ENCODE measurements at regions of chr7 and their contacts with region 1.

Region 1: GRCh38 chr7:55255496-55256435 is 109.4 kb upstream of the LANCL2 start:
- DNase-seq: no peak
- H3K4me3 ChIP-seq: peak overlapping the region; percentile 52
- H3K27me3 ChIP-seq: no peaks in the 10 kb centered on the region
- CTCF ChIP-seq: peak; percentile 84

Region 2: DNA sequence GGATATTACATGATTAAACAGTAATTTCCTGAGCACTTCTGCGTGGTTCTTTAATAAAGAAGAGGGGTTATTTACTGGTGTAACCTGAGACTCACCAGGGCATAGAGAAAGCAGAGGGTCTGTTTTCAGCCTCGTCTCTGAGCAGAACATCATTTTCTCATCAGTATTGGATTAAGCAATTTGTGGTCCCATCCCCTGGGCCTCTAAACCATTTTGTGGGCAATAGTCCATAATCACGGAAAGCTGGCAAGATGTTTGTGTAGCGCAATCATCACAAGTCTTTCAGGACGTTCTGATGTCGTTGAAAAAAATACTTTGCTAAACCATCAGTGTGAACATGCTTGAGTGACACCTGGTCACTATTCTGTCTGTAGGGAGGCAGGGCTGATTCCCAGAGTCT is 459.6 kb before region 1 on chr7:
- CTCF ChIA-PET with region 1: interaction called, 131 read pairs
- POLR2A ChIA-PET with region 1: no interaction called
- DNase-seq: no peak
- H3K4me3 ChIP-seq: no peak overlapping the region
- H3K27me3 ChIP-seq: no peaks in the 10 kb centered on the region; the same call in 1 of the 2 replicates
- CTCF ChIP-seq: no peak

Region 3: GRCh38 chr7:54877683-54878082 is 378.1 kb before region 1 on chr7:
- CTCF ChIA-PET with region 1: interaction called, 24 read pairs
- POLR2A ChIA-PET with region 1: no interaction called
- DNase-seq: no peak
- H3K4me3 ChIP-seq: no peak overlapping the region
- H3K27me3 ChIP-seq: no peaks in the 10 kb centered on the region
- CTCF ChIP-seq: no peak

Region 4: DNA sequence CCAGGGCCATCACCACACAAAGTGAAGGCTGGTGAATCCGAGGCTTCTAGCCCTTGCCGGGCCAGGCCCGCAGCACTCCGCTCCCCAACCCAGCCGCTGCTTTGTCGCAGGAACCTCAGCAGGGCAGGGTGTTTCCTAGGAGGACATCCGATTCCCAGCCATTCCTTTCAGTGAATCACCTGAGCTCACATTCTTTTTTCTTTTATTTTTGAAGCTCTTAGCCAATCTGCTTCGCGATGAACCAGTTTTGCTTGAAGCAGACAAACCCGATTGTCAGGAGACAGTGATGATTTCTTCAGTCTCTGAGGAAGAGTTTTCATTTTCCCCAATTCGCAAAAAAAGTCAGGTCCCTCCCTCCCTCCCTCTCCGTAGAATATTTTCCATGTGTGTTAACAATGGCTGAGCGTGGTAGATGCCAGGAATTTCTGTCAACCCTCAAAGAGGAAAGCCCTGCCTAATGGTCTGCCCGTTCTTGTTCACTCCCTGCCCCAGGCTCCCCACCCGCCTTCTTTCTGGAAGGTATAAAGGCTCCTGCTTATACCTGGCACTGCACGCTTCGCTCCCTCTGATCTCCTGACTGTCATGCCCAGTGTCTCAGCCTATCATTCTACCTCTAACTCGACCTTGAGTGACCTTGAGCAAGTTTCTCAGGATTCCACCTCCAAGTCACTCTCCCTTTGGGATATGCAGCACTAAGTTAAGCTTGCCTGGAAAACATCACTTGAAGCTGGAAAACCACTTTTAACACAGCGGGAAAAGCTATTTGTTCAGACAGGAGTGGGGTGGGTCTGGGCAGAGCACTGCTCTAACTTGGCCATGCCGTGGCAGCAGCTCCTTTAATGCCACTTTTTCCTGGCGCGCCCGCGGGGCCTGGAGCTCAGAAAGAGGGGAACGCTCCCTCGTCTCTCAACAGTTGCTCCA is 201.9 kb before region 1 on chr7:
- CTCF ChIA-PET with region 1: interaction called, 34 read pairs
- POLR2A ChIA-PET with region 1: no interaction called
- DNase-seq: no peak
- H3K4me3 ChIP-seq: no peak overlapping the region
- H3K27me3 ChIP-seq: no peaks in the 10 kb centered on the region
- CTCF ChIP-seq: peak; percentile 20; the same call in 1 of the 2 replicates

Region 5: DNA sequence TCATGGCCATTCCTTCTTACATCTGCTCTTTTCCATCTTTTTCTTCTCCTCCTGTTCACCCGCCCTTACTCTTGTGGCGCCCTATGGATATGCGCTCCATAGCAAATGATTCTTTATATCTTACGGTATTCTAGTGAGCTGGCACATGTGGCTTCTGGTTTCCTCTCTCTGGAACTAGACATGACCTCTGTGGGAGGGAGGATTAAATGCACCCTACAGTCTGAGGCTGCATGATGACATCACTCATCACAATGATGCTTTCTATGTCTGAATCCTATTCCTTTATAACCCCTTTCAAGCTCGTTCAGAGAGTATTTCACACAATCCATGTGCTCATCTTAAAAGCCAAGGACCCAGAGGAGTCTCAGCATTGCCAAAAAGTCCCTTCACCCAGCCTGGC is 83.6 kb before region 1 on chr7:
- CTCF ChIA-PET with region 1: interaction called, 14 read pairs
- POLR2A ChIA-PET with region 1: interaction called, 10 read pairs
- DNase-seq: no peak
- H3K4me3 ChIP-seq: no peak overlapping the region
- H3K27me3 ChIP-seq: no peaks in the 10 kb centered on the region
- CTCF ChIP-seq: no peak

Region 6: GRCh38 chr7:55245271-55245723 is 10.5 kb before region 1 on chr7:
- CTCF ChIA-PET with region 1: interaction called, 18 read pairs
- POLR2A ChIA-PET with region 1: no interaction called
- DNase-seq: no peak
- H3K4me3 ChIP-seq: no peak overlapping the region
- H3K27me3 ChIP-seq: no peaks in the 10 kb centered on the region; the same call in 1 of the 2 replicates
- CTCF ChIP-seq: no peak

Region 7: DNA sequence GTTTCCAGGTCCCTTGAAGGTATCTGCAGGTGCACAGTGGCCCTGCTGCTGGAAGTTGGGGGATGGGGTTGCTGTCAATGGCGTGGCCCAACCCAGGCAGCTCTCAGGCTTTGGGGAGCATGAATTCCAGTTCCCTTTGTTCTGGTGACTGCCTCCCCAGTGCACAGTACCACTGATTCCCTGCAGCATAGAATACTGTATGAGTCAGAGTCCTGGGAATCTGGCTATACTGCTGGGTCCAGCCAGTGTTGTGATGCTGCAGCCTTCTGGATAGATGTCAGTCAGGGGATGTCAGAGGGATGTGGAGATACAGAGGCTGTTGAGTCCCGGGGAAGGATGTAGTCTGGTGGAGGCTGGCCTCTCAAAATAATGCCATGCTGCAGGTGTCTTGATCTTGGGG is 208.7 kb after region 1 on chr7:
- CTCF ChIA-PET with region 1: no interaction called
- POLR2A ChIA-PET with region 1: no interaction called
- DNase-seq: no peak
- H3K4me3 ChIP-seq: no peak overlapping the region
- H3K27me3 ChIP-seq: no peaks in the 10 kb centered on the region
- CTCF ChIP-seq: no peak

Measured in BJ (cell line).